ENCODE measurements at regions of chr22 and their contacts with region 1.

Region 1: DNA sequence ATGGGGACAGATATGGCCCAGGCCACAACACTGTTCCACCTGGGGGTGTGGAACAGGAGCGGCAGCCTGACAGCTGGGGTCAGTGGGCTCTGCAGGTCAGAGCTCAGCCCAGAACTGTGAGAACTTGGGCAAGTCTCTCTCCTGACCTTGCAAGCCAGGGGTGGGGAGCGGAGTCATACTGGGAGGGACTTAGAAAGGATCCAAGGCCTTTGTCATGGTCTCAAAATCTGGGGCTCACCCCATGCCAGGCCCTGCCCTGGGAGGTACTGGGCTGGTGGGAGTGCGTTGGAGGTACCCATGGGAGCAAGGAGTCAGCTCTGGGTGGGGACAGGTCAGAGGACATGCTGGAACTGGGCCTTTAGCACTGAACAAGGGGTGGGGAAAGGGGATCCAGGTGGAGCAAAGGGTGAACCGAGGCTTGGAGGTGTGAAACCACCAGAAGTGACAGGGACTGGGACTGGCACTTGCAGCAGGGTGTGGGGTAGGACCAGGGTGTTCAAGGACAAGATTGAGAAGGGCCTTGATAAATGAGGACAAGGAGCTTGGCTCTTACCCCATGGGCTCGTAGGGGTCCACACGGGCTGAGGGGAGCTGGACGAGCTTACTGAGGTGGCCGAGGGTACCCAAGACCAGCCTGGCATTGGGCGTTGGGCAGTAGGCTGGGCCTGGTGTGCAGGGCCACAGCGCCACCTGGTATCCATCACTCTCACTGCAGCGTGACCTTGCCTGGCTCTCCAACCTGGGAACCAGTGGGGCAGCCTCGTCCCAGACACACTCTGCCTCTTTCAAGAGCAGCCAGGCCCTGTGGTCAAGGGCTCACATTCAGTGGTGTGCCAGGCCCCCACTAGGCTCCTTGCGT is 7.4 kb upstream of the PMM1 start:
- DNase-seq: peak; percentile 66

Region 2: DNA sequence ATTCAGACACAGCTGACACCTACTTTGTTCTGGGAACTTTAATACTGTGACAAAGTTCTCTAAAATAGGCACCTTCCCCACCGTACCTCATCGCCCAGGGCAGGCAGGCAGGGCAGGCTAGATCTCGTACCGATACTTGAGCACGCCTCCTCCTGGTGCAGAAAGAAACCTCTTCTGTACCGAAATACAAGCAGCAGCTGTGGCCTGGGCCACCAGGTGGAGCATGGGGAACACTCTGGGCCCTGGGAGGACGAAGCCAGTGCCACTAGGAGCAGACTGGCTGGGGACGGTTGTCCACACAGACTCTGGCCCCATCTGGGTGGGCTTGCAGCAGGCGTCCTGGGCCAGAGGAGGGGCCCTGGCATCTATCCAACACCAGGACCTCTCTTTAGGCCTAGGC is 20.1 kb before region 1 on chr22:
- CTCF ChIA-PET with region 1: interaction called, 10 read pairs
- POLR2A ChIA-PET with region 1: no interaction called
- DNase-seq: peak; percentile 78

Measured in HEK293T (cell line).